Mammary epithelial cell (primary cell): ENCODE measurements at regions of chr17 and their contacts with region 1.

Region 1: DNA sequence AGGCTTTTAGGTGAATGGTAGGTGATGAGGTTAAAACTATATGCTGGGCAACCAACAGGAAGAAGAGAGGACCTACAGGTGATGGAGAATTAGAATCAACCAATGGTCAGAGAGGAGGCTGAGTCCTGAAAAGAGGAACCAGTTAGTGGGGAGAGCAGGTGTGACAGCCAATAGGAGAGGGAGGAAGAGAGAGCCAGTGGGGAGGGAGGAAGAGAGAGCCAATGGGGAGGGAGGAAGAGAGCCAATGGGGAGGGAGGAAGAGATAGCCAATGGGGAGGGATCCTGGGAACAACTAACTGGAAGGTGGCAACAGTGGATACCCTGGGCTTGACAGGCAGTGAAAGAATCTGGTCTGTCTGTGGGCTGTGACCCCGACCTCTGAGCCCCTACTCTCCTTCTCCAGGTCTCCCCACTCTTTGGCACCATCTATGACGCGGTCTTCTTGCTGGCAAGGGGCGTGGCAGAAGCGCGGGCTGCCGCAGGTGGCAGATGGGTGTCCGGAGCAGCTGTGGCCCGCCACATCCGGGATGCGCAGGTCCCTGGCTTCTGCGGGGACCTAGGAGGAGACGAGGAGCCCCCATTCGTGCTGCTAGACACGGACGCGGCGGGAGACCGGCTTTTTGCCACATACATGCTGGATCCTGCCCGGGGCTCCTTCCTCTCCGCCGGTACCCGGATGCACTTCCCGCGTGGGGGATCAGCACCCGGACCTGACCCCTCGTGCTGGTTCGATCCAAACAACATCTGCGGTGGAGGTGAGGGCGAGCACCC is 3.7 kb downstream of the GUCY2D start:
- DNase-seq: no peak
- H3K4me3 ChIP-seq: no peak overlapping the region
- H3K27ac ChIP-seq: no peak overlapping the region
- H3K4me1 ChIP-seq: peaks cover 17% of the 10 kb centered on the region
- H3K27me3 ChIP-seq: no peaks in the 10 kb centered on the region
- CTCF ChIP-seq: no peak

Region 2: GRCh38 chr17:7944326-7944725 is 61.8 kb before region 1 on chr17:
- CTCF ChIA-PET with region 1: no interaction called
- dilution Hi-C with region 1: loop called (anchors 5 kb)
- in situ Hi-C with region 1: no loop called
- intact Hi-C with region 1: no loop called
- DNase-seq: no peak
- H3K4me3 ChIP-seq: no peak overlapping the region
- H3K27ac ChIP-seq: no peak overlapping the region
- H3K4me1 ChIP-seq: no peaks in the 10 kb centered on the region
- H3K27me3 ChIP-seq: no peaks in the 10 kb centered on the region
- CTCF ChIP-seq: no peak

Region 3: DNA sequence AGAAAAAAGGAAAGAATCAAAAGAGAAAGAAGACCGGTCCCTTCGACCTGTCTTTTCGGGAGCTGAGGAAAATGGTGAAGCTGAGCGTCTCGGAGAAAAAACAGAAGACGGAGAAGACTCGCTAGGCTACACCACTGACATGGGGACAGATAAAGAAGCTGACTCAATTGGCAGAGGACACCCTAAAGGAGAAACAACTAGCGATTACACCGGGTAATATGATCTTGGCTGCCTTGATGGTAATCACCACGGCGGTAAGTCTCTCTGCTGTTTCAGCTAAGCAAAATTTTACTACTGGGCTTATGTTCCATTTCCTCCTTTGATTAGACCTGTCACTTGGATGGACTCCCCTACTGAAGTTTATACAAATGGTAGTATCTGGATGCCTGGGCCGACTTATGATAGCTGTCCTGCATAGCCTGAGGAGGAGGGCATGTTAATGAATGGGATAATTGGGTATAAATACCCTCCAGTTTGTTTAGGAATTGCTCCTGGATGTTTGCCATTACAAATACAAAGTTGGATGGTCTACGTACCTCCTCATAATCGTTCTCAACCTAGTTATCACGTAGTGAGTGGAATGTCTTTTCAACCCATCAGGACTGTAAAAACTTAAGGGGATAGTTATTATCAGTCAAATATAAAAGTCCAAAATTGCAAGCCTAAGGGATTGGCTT is 56.8 kb after region 1 on chr17:
- CTCF ChIA-PET with region 1: no interaction called
- dilution Hi-C with region 1: no loop called
- in situ Hi-C with region 1: no loop called
- intact Hi-C with region 1: no loop called
- DNase-seq: no peak
- H3K4me3 ChIP-seq: peak overlapping the region in 2 of 3 experiments; percentile 23 to 25
- H3K27ac ChIP-seq: no peak overlapping the region
- H3K4me1 ChIP-seq: peaks cover 4% of the 10 kb centered on the region
- H3K27me3 ChIP-seq: no peaks in the 10 kb centered on the region
- CTCF ChIP-seq: no peak

Region 4: DNA sequence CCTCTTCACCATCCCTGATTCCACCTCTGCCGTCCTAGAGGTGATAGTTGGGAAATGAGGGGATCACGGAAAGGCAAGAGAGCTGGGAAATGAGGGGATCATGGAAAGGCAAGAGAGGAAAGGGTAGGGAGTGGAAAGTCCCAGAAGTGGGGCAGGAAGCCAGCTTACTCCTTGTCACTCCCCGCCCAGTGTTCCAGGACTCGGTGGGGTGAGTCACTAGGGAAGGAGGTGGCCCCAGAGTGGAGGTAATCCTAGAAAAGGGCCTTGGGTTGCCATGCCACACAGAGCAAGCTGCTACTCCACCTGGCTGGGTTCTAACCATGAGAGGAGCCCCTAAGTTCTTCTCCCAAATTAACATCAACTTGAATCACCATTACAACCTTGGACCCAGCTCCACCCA is 97.4 kb after region 1 on chr17:
- CTCF ChIA-PET with region 1: no interaction called
- dilution Hi-C with region 1: loop called (anchors 5 kb)
- in situ Hi-C with region 1: no loop called
- intact Hi-C with region 1: no loop called
- DNase-seq: peak; percentile 77
- H3K4me3 ChIP-seq: no peak overlapping the region
- H3K27ac ChIP-seq: peak overlapping the region; percentile 28
- H3K4me1 ChIP-seq: peaks cover 38% of the 10 kb centered on the region
- H3K27me3 ChIP-seq: no peaks in the 10 kb centered on the region
- CTCF ChIP-seq: no peak

Region 5: GRCh38 chr17:8287651-8288335 is 281.6 kb after region 1 on chr17:
- CTCF ChIA-PET with region 1: no interaction called
- dilution Hi-C with region 1: no loop called
- in situ Hi-C with region 1: no loop called
- intact Hi-C with region 1: no loop called
- DNase-seq: no peak
- H3K4me3 ChIP-seq: peak overlapping the region; percentile 70 to 80 (median 76)
- H3K27ac ChIP-seq: peak overlapping the region; percentile 62
- H3K4me1 ChIP-seq: peaks cover 12% of the 10 kb centered on the region
- H3K27me3 ChIP-seq: no peaks in the 10 kb centered on the region
- CTCF ChIP-seq: no peak